ENCODE measurements at regions of chr7 and their contacts with region 1.

Region 1: GRCh38 chr7:122896509-122896908 is 10.2 kb upstream of the CADPS2 start:
- DNase-seq: no peak
- H3K4me3 ChIP-seq: no peak overlapping the region
- H3K27ac ChIP-seq: no peak overlapping the region
- H3K4me1 ChIP-seq: no peaks in the 10 kb centered on the region
- H3K27me3 ChIP-seq: no peaks in the 10 kb centered on the region
- CTCF ChIP-seq: peak in 1 of 6 experiments; percentile 23
- POLR2A ChIP-seq: no peak

Region 2: DNA sequence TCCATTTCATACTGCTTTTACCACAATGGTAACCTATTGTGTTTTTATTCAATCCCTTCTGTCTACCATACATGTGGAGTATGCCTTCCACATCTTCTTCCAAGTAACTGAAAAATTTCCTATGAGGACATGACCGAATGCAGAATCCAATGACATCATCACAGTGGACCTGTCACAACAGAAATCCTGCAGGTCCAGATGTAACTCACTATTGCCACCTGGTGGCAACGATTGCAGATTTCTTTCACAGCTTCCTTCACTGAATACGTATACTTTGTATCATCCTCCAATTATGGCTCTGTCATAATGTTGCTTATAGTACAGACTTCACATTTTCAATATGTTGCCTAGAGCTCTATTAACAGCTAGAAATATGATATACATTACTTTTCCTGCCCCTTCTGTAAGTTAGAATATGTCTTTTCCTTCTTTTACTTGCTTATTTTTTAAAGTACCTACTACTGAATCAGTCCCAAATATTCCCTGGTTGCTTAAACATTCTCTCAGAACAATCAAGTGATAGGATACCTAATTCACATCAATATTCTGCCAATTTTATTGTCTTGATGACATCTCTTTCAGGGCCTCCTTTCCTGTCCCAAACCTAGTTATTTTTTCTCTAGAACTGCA is 257.8 kb after region 1 on chr7:
- intact Hi-C with region 1: loop called (anchors 10 kb)
- DNase-seq: no peak
- H3K4me3 ChIP-seq: no peak overlapping the region
- H3K27ac ChIP-seq: no peak overlapping the region
- H3K4me1 ChIP-seq: no peaks in the 10 kb centered on the region
- H3K27me3 ChIP-seq: no peaks in the 10 kb centered on the region
- CTCF ChIP-seq: peak in 5 of 6 experiments; percentile 60 to 81 (median 67)
- POLR2A ChIP-seq: no peak

Measured in esophagus squamous epithelium (tissue), 5 donors.